Head of caudate nucleus (tissue), 42 donors: ENCODE measurements at regions of chr1 and their contacts with region 1.

Region 1: GRCh38 chr1:227946624-227947385 is 927 bp downstream of the WNT9A start:
- DNase-seq: peak; percentile 22 to 87 (median 70)

Region 2: DNA sequence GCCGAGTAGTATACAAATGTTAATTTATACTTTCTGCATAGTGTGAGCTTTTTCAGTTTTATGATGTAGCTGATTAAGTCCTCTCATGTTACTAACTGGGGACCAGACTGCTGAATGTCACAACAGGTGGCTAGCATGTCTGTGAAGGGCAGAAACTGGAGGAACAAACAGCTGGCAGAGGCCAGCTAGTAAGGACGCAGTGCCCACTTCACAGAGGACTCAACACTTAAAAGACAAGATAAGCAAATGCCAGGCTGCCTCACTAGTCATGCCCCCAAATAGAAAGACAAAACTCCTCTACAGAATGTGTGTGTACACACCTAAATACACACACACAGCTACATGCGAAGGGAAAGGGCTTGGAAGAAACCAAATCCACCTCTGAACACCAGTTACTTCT is 457.2 kb before region 1 on chr1:
- intact Hi-C with region 1: loop called (anchors 10 kb)
- DNase-seq: no peak

Region 3: DNA sequence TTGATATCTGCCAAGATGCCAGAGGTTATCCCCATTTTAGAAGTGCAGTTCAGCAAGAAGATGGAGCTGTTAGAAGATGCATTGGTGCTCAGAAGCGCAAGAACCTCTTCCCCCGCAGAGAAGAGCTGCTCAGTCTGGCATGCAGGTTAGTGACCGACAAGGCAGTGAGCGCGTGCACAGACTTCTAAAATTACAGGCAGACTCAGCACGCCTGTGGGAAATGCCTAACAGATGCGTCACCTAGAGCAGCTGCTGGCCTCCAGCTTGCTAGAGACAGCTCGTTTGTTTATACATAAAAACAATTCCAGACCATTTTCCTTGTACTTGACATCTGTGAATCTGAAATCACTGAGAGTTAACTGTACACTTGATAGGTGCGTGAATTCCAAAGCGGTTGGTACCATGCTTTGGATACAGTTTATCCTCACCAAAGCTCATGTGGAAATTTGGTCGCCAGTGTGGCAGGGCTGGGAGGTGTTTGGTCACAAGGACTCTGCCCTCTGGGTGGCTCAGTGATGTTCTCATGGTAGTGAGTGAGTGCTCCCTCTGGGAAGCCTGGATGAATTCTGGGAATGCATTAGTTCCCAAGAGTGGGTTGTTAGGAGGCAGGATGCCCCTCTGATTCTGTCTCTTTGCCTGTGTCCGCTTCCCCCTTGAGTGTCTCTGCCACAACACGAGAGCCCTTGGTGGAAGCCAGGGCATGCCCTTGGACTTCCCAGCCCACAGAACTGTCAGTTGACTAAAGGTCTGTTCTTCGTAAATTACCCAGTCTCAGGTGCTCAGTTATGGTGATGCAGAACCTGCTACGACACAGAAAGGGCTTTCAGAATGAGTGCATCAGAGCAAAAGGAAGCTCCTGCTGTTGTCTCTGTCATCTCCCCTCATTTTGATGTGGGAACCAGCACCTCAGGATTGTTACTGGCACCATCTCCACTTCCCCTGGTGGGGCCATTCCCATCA is 187.2 kb before region 1 on chr1:
- intact Hi-C with region 1: loop called (anchors 2 kb)
- DNase-seq: no peak